Activated CD4-positive, alpha-beta memory T cell treated with anti-CD3 and anti-CD28 coated beads, Interleukin-2, amount 10 ng/mL, durations not matched to agents 7 days and 5 days (primary cell): ENCODE measurements at regions of chr2 and their contacts with region 1.

Region 1: GRCh38 chr2:120312861-120313694 is 32.9 kb upstream of the INHBB start:
- DNase-seq: peak; percentile 82
- H3K4me3 Mint-ChIP-seq: peak overlapping the region; percentile 46
- H3K27ac Mint-ChIP-seq: peak overlapping the region; percentile 56
- H3K4me1 Mint-ChIP-seq: peaks cover 35% of the 10 kb centered on the region
- H3K27me3 Mint-ChIP-seq: no peaks in the 10 kb centered on the region

Region 2: GRCh38 chr2:120109186-120110061 is 203.7 kb before region 1 on chr2:
- CTCF ChIA-PET with region 1: interaction called, 26 read pairs
- POLR2A ChIA-PET with region 1: no interaction called
- DNase-seq: no peak
- H3K4me3 Mint-ChIP-seq: peak overlapping the region; percentile 38
- H3K27ac Mint-ChIP-seq: peak overlapping the region; percentile 32
- H3K4me1 Mint-ChIP-seq: peaks cover 17% of the 10 kb centered on the region
- H3K27me3 Mint-ChIP-seq: peaks cover 27% of the 10 kb centered on the region

Region 3: DNA sequence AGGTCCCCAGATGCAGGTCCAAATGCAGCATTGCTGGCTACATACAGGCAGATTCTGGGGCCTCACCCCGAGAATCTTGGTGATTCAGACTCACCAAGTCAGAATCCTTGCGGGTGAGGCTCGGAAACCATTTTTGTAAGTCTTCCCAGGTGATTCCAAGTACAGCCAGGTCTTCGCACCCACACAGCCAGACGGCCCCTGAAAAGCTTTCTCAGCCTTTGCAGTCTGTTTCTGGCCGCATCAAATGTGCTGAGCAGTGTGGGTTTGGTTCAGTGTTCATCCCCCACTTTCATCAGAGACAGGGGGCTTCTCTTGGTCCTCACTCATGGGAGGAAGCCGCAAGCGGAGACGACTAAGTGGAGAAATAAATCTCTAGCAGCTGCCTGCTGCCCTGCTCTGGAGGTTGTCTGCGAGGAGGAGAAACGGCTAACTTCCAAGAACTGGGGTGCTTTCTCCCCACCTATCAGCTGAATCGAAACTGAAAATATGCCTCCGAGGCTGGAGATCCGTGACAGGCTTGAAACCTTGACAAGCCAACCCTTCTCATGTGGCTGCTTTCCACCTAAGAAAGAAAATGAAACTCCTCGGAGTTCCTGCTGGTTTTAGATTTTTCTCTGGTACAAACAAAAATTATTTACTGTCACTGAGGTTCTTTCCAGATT is 81.0 kb before region 1 on chr2:
- CTCF ChIA-PET with region 1: interaction called, 50 read pairs
- POLR2A ChIA-PET with region 1: interaction called, 34 read pairs
- DNase-seq: peak; percentile 84
- H3K4me3 Mint-ChIP-seq: peak overlapping the region; percentile 96
- H3K27ac Mint-ChIP-seq: peak overlapping the region; percentile 99
- H3K4me1 Mint-ChIP-seq: peaks cover 57% of the 10 kb centered on the region
- H3K27me3 Mint-ChIP-seq: no peaks in the 10 kb centered on the region

Region 4: DNA sequence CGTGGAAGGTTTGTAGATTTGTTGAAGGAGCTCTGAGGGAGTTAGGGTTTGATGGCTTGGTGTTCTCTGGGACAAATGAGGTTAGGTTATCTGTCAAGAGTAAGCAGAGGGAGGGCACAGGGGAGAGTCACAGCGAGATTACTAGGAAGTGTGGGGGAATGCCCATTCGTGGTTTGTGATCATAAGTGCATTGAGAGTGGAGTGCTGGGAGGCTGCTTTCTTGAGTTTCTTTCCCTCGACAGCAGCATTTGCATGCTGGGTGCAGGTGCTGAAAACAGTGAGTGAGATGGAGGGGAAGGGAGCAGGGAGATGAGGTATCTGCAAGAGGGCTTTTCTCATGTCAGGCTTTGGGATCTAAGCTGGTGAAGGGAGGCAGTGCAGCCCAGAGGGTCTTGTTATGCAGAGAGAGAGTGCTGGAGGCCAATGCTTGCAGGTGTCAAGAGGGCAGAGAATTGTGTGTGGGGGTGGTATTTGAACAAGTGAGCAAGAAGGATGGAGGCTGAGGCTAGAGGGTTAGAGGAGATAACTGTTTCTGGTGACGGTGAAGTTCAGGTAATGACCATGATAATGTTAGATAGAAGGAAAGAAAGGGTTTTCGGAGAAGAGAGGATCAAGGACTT is 51.6 kb before region 1 on chr2:
- CTCF ChIA-PET with region 1: interaction called, 18 read pairs
- POLR2A ChIA-PET with region 1: no interaction called
- DNase-seq: peak; percentile 36
- H3K4me3 Mint-ChIP-seq: no peak overlapping the region
- H3K27ac Mint-ChIP-seq: no peak overlapping the region
- H3K4me1 Mint-ChIP-seq: peaks cover 34% of the 10 kb centered on the region
- H3K27me3 Mint-ChIP-seq: no peaks in the 10 kb centered on the region

Region 5: GRCh38 chr2:120298173-120298835 is 14.8 kb before region 1 on chr2:
- CTCF ChIA-PET with region 1: interaction called, 71 read pairs
- POLR2A ChIA-PET with region 1: interaction called, 4 read pairs
- DNase-seq: no peak
- H3K4me3 Mint-ChIP-seq: no peak overlapping the region
- H3K27ac Mint-ChIP-seq: no peak overlapping the region
- H3K4me1 Mint-ChIP-seq: peaks cover 19% of the 10 kb centered on the region
- H3K27me3 Mint-ChIP-seq: no peaks in the 10 kb centered on the region